Activated CD4-positive, alpha-beta memory T cell treated with anti-CD3 and anti-CD28 coated beads, Interleukin-2, amount 10 ng/mL, durations not matched to agents 7 days and 5 days (primary cell): ENCODE measurements at regions of chr16 and their contacts with region 1.

Region 1: GRCh38 chr16:28211712-28212534 is at the start of gene XPO6:
- DNase-seq: peak; percentile 99
- H3K4me3 Mint-ChIP-seq: peak within 1 kb of the TSS; percentile 76
- H3K27ac Mint-ChIP-seq: peak within 1 kb of the TSS; percentile 95
- H3K4me1 Mint-ChIP-seq: peaks cover 36% of the 10 kb centered on the region
- H3K27me3 Mint-ChIP-seq: no peaks in the 10 kb centered on the region
- total RNA-seq, gene XPO6: 218 to 223 TPM

Region 2: GRCh38 chr16:28086186-28087139 is 125.5 kb before region 1 on chr16:
- CTCF ChIA-PET with region 1: no interaction called
- POLR2A ChIA-PET with region 1: no interaction called
- DNase-seq: no peak
- H3K4me3 Mint-ChIP-seq: no peak overlapping the region
- H3K27ac Mint-ChIP-seq: no peak overlapping the region
- H3K4me1 Mint-ChIP-seq: no peaks in the 10 kb centered on the region
- H3K27me3 Mint-ChIP-seq: no peaks in the 10 kb centered on the region

Region 3: DNA sequence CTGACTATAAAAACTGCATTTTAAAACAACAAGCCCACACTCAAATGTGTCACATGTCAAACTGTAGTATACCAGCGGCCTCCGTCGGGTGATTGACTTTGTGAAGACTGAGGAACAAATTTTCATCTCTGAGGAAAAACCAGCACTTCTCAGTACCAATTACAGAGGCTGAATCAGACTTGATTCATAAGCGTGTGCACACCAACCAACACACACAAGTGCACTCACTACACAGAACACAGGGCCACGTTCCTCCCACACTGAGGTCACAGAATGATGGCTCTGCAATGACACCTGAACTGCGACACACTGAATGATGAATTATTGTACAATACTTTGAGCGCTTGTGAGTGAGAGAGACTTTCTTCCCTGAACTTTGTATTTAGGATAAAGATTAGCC is 29.7 kb before region 1 on chr16:
- CTCF ChIA-PET with region 1: interaction called, 26 read pairs
- POLR2A ChIA-PET with region 1: interaction called, 208 read pairs
- DNase-seq: no peak
- H3K4me3 Mint-ChIP-seq: no peak overlapping the region
- H3K27ac Mint-ChIP-seq: peak overlapping the region; percentile 73
- H3K4me1 Mint-ChIP-seq: peaks cover 73% of the 10 kb centered on the region
- H3K27me3 Mint-ChIP-seq: no peaks in the 10 kb centered on the region

Region 4: DNA sequence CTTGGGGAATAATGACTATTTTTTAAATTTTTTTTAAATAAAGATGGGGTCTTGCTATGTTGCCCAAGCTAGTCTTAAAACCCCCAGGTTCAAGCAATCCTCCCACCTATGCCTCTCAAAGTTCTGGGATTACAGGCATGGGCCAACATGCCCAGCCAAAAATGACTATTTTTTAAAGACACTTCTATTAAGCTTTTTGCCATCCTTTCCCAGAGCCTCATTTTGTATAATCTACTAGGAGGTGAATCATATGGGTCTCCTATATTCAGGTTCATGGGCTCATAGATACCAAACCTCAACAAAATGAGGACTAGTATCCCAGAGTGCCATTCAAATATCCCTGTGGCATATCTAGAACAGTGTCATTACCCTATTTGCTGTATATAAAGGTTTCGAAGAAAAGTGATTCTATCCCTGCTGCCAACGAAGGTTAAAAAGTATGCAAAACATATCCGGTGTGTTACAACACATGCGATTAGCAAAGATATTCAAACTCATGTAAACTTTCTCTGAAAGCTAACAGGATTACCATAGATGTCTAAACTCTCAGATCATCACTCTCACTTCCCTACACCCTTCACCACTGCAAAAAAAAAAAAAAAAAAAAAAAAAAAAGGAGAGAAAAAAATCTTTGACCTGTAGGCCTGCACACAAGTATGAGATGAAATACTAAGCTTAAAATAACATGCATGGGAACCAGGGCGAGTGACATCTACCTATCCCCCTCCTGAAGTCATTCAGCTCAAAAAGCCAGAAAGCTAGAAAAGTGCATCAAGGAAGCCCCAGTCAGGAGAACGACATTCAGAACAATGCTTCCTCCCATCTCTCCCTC is 23.6 kb before region 1 on chr16:
- CTCF ChIA-PET with region 1: interaction called, 37 read pairs
- POLR2A ChIA-PET with region 1: interaction called, 208 read pairs
- DNase-seq: no peak
- H3K4me3 Mint-ChIP-seq: peak overlapping the region; percentile 58
- H3K27ac Mint-ChIP-seq: peak overlapping the region; percentile 83
- H3K4me1 Mint-ChIP-seq: peaks cover 87% of the 10 kb centered on the region
- H3K27me3 Mint-ChIP-seq: no peaks in the 10 kb centered on the region

Region 5: GRCh38 chr16:28193530-28194423 is 18.1 kb before region 1 on chr16:
- CTCF ChIA-PET with region 1: interaction called, 37 read pairs
- POLR2A ChIA-PET with region 1: interaction called, 208 read pairs
- DNase-seq: peak; percentile 45
- H3K4me3 Mint-ChIP-seq: peak overlapping the region; percentile 75
- H3K27ac Mint-ChIP-seq: peak overlapping the region; percentile 96
- H3K4me1 Mint-ChIP-seq: peaks cover 78% of the 10 kb centered on the region
- H3K27me3 Mint-ChIP-seq: no peaks in the 10 kb centered on the region